ENCODE measurements at regions of chr12 and their contacts with region 1.

Region 1: GRCh38 chr12:38316391-38317129 is at the start of gene ALG10B:
- DNase-seq: peak; percentile 94 to 96
- H3K4me3 ChIP-seq: peak within 1 kb of the TSS; percentile 41
- H3K4me3 Mint-ChIP-seq: peak within 1 kb of the TSS; percentile 83
- H3K27ac Mint-ChIP-seq: peak within 1 kb of the TSS; percentile 89
- H3K4me1 ChIP-seq: no peaks in the 10 kb centered on the region
- H3K4me1 Mint-ChIP-seq: peaks cover 13% of the 10 kb centered on the region
- H3K27me3 ChIP-seq: no peaks in the 10 kb centered on the region
- H3K27me3 Mint-ChIP-seq: no peaks in the 10 kb centered on the region
- CTCF ChIP-seq: peak; percentile 66 to 81
- total RNA-seq, gene ALG10B: 10.9 and 11.9 TPM in 2 replicates

Region 2: GRCh38 chr12:37672655-37673260 is 643.8 kb before region 1 on chr12:
- CTCF ChIA-PET with region 1: no interaction called
- POLR2A ChIA-PET with region 1: no interaction called
- intact Hi-C with region 1: loop called (anchors 1 kb)
- DNase-seq: no peak
- H3K4me3 ChIP-seq: no peak overlapping the region
- H3K4me3 Mint-ChIP-seq: no peak overlapping the region
- H3K27ac Mint-ChIP-seq: no peak overlapping the region
- H3K4me1 ChIP-seq: no peaks in the 10 kb centered on the region
- H3K4me1 Mint-ChIP-seq: no peaks in the 10 kb centered on the region
- H3K27me3 ChIP-seq: no peaks in the 10 kb centered on the region
- H3K27me3 Mint-ChIP-seq: no peaks in the 10 kb centered on the region
- CTCF ChIP-seq: peak; percentile 17 to 33

Region 3: GRCh38 chr12:38053655-38054464 is 262.7 kb before region 1 on chr12:
- CTCF ChIA-PET with region 1: no interaction called
- POLR2A ChIA-PET with region 1: no interaction called
- intact Hi-C with region 1: loop called (anchors 1 kb)
- DNase-seq: peak; percentile 58 to 62
- H3K4me3 ChIP-seq: no peak overlapping the region
- H3K4me3 Mint-ChIP-seq: no peak overlapping the region
- H3K27ac Mint-ChIP-seq: no peak overlapping the region
- H3K4me1 ChIP-seq: no peaks in the 10 kb centered on the region
- H3K4me1 Mint-ChIP-seq: no peaks in the 10 kb centered on the region
- H3K27me3 ChIP-seq: no peaks in the 10 kb centered on the region
- H3K27me3 Mint-ChIP-seq: no peaks in the 10 kb centered on the region
- CTCF ChIP-seq: peak; percentile 37 to 45

Region 4: GRCh38 chr12:38138225-38139221 is 178.0 kb before region 1 on chr12:
- CTCF ChIA-PET with region 1: interaction called, 7 read pairs
- POLR2A ChIA-PET with region 1: no interaction called
- intact Hi-C with region 1: loop called (anchors 1 kb)
- DNase-seq: peak; percentile 75 to 82
- H3K4me3 ChIP-seq: peak overlapping the region; percentile 28
- H3K4me3 Mint-ChIP-seq: peak overlapping the region; percentile 72
- H3K27ac Mint-ChIP-seq: no peak overlapping the region
- H3K4me1 ChIP-seq: peaks cover 4% of the 10 kb centered on the region; the same call in 1 of the 2 replicates
- H3K4me1 Mint-ChIP-seq: no peaks in the 10 kb centered on the region
- H3K27me3 ChIP-seq: no peaks in the 10 kb centered on the region
- H3K27me3 Mint-ChIP-seq: peaks cover 3% of the 10 kb centered on the region
- CTCF ChIP-seq: peak; percentile 91 to 94

Measured in Caco-2 (cell line).